ENCODE measurements at regions of chr1 and their contacts with region 1.

Region 1: DNA sequence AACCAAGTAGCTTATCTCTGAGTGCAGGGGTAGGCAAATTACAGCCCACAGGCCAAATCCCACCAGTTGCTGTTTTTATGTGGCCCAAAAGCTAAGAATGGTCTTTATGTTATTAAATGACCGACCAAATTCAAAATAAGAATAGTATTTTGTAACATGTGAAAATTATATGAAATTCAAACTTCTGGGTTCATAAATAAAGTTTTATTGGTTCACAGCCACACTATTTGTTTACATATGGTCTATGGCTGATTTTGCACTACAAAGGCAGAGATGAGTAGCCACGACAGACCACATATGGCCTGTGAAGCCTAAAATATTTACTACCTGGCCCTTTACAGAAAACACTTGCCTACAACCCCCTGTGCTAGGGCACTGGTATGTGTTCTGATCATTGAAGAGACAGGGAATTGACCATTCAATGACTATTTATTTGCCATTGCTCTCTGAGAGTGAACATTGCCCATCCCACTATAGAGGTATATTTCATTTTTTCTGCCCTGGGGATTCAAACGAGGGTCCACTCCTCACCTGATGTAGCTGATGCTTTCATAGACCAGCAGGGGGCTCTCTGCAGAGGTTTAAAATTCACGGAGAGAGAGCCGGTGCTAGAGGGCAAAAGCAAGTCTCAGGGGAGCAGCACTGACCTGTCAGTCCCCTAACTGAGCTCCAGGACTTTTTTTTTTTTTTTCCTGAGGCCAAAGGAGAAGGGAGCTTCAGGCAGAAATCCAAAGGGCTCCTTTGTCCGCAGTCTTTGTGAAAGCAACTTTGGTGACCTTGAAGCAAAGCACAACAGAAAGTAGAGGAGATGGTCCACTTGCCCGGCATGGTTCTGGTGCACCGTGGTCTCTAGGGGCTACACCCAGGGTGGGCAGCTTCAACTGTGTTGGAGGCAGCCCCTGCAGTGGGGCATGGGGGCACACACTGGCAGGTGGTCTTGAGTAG is 7.3 kb upstream of the GNL2 start:
- DNase-seq: peak; percentile 29 to 56
- ATAC-seq: peak; percentile 82 to 90; a peak in 5 of 6 replicates
- H3K4me3 ChIP-seq: no peak overlapping the region
- H3K27ac ChIP-seq: no peak overlapping the region
- H3K4me1 ChIP-seq: no peaks in the 10 kb centered on the region
- CTCF ChIP-seq: peak; percentile 68
- EP300 ChIP-seq: no peak
- POLR2A ChIP-seq: no peak
- RAD21 ChIP-seq: peak; percentile 46 to 50; a peak in 3 of 5 replicates

Region 2: GRCh38 chr1:37506740-37507139 is 96.3 kb before region 1 on chr1:
- CTCF ChIA-PET with region 1: no interaction called
- POLR2A ChIA-PET with region 1: no interaction called
- DNase-seq: no peak
- ATAC-seq: no peak
- H3K4me3 ChIP-seq: no peak overlapping the region
- H3K27ac ChIP-seq: no peak overlapping the region; a peak in 1 of 6 replicates
- H3K4me1 ChIP-seq: no peaks in the 10 kb centered on the region
- CTCF ChIP-seq: no peak
- EP300 ChIP-seq: no peak
- POLR2A ChIP-seq: no peak
- RAD21 ChIP-seq: no peak

Region 3: GRCh38 chr1:37622131-37622530 is 19.1 kb after region 1 on chr1:
- CTCF ChIA-PET with region 1: interaction called, 24 read pairs
- POLR2A ChIA-PET with region 1: no interaction called
- DNase-seq: peak in 1 of 2 experiments; percentile 15
- ATAC-seq: peak in 1 of 2 experiments; percentile 45; a peak in 2 of 6 replicates
- H3K4me3 ChIP-seq: no peak overlapping the region
- H3K27ac ChIP-seq: no peak overlapping the region
- H3K4me1 ChIP-seq: no peaks in the 10 kb centered on the region
- CTCF ChIP-seq: no peak
- EP300 ChIP-seq: no peak
- POLR2A ChIP-seq: no peak
- RAD21 ChIP-seq: no peak

Region 4: GRCh38 chr1:37630426-37631028 is 27.5 kb after region 1 on chr1:
- CTCF ChIA-PET with region 1: interaction called, 24 read pairs
- POLR2A ChIA-PET with region 1: no interaction called
- DNase-seq: no peak
- ATAC-seq: no peak
- H3K4me3 ChIP-seq: no peak overlapping the region
- H3K27ac ChIP-seq: no peak overlapping the region
- H3K4me1 ChIP-seq: no peaks in the 10 kb centered on the region
- CTCF ChIP-seq: no peak
- EP300 ChIP-seq: no peak
- POLR2A ChIP-seq: no peak
- RAD21 ChIP-seq: no peak

Region 5: GRCh38 chr1:37682334-37682987 is 79.4 kb after region 1 on chr1:
- CTCF ChIA-PET with region 1: interaction called, 128 read pairs
- POLR2A ChIA-PET with region 1: no interaction called
- DNase-seq: peak; percentile 40 to 44
- ATAC-seq: peak; percentile 59 to 87; a peak in 5 of 6 replicates
- H3K4me3 ChIP-seq: no peak overlapping the region
- H3K27ac ChIP-seq: no peak overlapping the region
- H3K4me1 ChIP-seq: no peaks in the 10 kb centered on the region
- CTCF ChIP-seq: peak; percentile 76
- EP300 ChIP-seq: no peak
- POLR2A ChIP-seq: no peak
- RAD21 ChIP-seq: peak; percentile 75 to 79

Region 6: DNA sequence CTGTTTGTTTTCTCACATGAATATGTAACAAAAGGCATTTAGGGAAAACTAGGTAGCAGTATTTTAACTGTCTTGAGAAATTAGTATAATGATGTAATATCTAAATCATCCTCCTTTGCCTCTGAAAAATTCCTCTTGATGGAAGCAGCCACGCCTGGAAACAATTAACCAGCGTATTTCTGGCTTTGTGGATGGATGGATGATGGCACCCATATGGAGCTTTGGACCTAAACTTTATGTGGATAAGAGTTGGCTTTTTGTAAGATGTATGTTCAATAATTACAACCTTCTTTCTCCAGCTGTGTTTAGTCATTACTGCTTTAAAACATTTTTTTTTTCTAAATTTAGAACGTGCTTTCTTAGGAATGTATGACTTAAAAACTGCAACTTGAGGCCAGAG is 101.9 kb after region 1 on chr1:
- CTCF ChIA-PET with region 1: no interaction called
- POLR2A ChIA-PET with region 1: no interaction called
- DNase-seq: no peak
- ATAC-seq: no peak
- H3K4me3 ChIP-seq: no peak overlapping the region
- H3K27ac ChIP-seq: no peak overlapping the region
- H3K4me1 ChIP-seq: no peaks in the 10 kb centered on the region
- CTCF ChIP-seq: no peak
- EP300 ChIP-seq: no peak
- POLR2A ChIP-seq: no peak
- RAD21 ChIP-seq: no peak